ENCODE measurements at regions of chr11 and their contacts with region 1.

Region 1: GRCh38 chr11:100827934-100828661 is 141.0 kb downstream of the ARHGAP42 start:
- DNase-seq: peak; percentile 70
- H3K4me3 ChIP-seq: no peak overlapping the region
- H3K27ac ChIP-seq: no peak overlapping the region
- H3K4me1 ChIP-seq: no peaks in the 10 kb centered on the region
- H3K27me3 ChIP-seq: no peaks in the 10 kb centered on the region
- CTCF ChIP-seq: peak; percentile 33 to 48
- POLR2A ChIP-seq: no peak

Region 2: DNA sequence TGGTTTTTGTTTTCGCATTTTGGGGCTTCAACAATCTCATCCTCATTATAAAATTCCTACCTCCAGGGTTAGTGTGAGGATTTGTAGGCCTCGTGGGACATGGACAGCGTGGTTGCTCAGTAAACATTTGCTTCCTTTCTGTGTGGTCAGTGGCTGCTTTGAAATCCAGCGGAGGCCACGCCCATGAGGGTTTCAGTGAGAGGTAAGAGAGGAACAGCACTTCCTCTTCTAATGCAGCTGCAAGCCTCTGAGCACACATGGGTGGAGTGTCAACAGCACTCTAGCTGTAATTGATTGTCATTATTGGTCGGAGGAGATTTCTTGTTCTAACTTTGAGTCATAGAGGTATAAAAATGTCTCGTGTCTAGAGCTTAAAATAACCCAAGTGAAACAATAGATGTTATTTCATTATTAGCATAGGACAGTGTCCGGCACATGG is 147.0 kb before region 1 on chr11:
- CTCF ChIA-PET with region 1: interaction called, 38 read pairs
- POLR2A ChIA-PET with region 1: no interaction called
- dilution Hi-C with region 1: no loop called
- intact Hi-C with region 1: loop called (anchors 1 kb)
- DNase-seq: no peak
- H3K4me3 ChIP-seq: no peak overlapping the region
- H3K27ac ChIP-seq: no peak overlapping the region
- H3K4me1 ChIP-seq: no peaks in the 10 kb centered on the region
- H3K27me3 ChIP-seq: no peaks in the 10 kb centered on the region
- CTCF ChIP-seq: no peak
- POLR2A ChIP-seq: no peak

Region 3: GRCh38 chr11:100816823-100817222 is 11.3 kb before region 1 on chr11:
- CTCF ChIA-PET with region 1: interaction called, 21 read pairs
- POLR2A ChIA-PET with region 1: no interaction called
- dilution Hi-C with region 1: no loop called
- intact Hi-C with region 1: no loop called
- DNase-seq: peak; percentile 58
- H3K4me3 ChIP-seq: no peak overlapping the region
- H3K27ac ChIP-seq: no peak overlapping the region
- H3K4me1 ChIP-seq: peaks cover 8% of the 10 kb centered on the region
- H3K27me3 ChIP-seq: no peaks in the 10 kb centered on the region
- CTCF ChIP-seq: no peak
- POLR2A ChIP-seq: no peak

Region 4: GRCh38 chr11:100849009-100849900 is 21.2 kb after region 1 on chr11:
- CTCF ChIA-PET with region 1: interaction called, 12 read pairs
- POLR2A ChIA-PET with region 1: no interaction called
- dilution Hi-C with region 1: no loop called
- intact Hi-C with region 1: no loop called
- DNase-seq: peak; percentile 33
- H3K4me3 ChIP-seq: no peak overlapping the region
- H3K27ac ChIP-seq: no peak overlapping the region
- H3K4me1 ChIP-seq: peaks cover 4% of the 10 kb centered on the region
- H3K27me3 ChIP-seq: no peaks in the 10 kb centered on the region
- CTCF ChIP-seq: no peak
- POLR2A ChIP-seq: no peak

Region 5: GRCh38 chr11:101706541-101706940 is 878.4 kb after region 1 on chr11:
- CTCF ChIA-PET with region 1: no interaction called
- POLR2A ChIA-PET with region 1: no interaction called
- dilution Hi-C with region 1: no loop called
- intact Hi-C with region 1: no loop called
- DNase-seq: no peak
- H3K4me3 ChIP-seq: no peak overlapping the region
- H3K27ac ChIP-seq: no peak overlapping the region
- H3K4me1 ChIP-seq: no peaks in the 10 kb centered on the region
- H3K27me3 ChIP-seq: no peaks in the 10 kb centered on the region
- CTCF ChIP-seq: no peak
- POLR2A ChIP-seq: no peak